A673 (cell line): ENCODE measurements at regions of chr11 and their contacts with region 1.

Region 1: DNA sequence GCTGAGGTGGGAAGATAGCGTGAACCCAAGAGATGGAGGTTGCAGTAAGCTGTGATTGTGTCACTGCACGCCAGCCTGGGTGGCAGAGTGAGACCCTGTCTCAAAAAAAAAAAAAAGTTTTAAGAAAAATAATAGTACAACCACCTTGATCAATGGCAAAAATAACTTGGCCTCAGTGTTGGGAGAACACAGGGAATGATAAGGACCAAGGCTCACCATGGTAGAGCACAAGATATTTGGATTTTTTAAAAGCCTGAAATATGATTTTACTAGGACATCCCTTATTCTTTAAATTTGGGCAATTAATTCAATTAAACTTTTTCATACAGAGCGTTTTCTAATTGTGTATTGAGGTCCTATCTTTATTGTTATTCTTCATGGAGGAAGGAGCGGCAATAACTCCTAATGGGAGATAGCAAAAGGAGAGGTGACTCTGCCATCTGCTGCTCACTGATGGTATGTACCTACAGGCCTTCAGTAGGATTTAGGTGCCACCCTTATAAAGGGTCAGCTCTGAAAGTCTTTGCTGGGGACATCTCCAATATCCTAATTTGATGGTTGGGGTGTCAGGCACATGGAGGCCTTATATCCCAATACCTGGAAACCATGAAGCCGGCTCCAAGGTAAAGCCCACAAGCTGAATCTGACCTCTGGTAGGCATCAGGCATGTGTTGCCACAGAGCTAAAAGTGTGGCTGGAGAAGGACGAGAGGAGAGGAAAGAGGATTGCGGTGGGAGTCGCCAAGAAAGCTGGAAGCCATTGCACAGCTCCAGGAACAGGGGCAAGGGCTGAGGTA is 21.9 kb upstream of the POLD3 start:
- DNase-seq: peak; percentile 81
- H3K4me3 ChIP-seq: no peak overlapping the region
- H3K27ac ChIP-seq: no peak overlapping the region
- H3K4me1 ChIP-seq: no peaks in the 10 kb centered on the region
- H3K27me3 ChIP-seq: no peaks in the 10 kb centered on the region
- CTCF ChIP-seq: peak; percentile 93

Region 2: GRCh38 chr11:74269161-74269811 is 301.2 kb before region 1 on chr11:
- CTCF ChIA-PET with region 1: interaction called, 12 read pairs
- POLR2A ChIA-PET with region 1: no interaction called
- intact Hi-C with region 1: no loop called
- DNase-seq: no peak
- H3K4me3 ChIP-seq: no peak overlapping the region
- H3K27ac ChIP-seq: no peak overlapping the region
- H3K4me1 ChIP-seq: no peaks in the 10 kb centered on the region
- H3K27me3 ChIP-seq: no peaks in the 10 kb centered on the region
- CTCF ChIP-seq: no peak

Region 3: GRCh38 chr11:74388678-74389327 is 181.7 kb before region 1 on chr11:
- CTCF ChIA-PET with region 1: interaction called, 4 read pairs
- POLR2A ChIA-PET with region 1: no interaction called
- intact Hi-C with region 1: loop called (anchors 2 kb)
- DNase-seq: peak; percentile 82
- H3K4me3 ChIP-seq: no peak overlapping the region
- H3K27ac ChIP-seq: no peak overlapping the region
- H3K4me1 ChIP-seq: peaks cover 12% of the 10 kb centered on the region
- H3K27me3 ChIP-seq: no peaks in the 10 kb centered on the region
- CTCF ChIP-seq: peak; percentile 95

Region 4: GRCh38 chr11:74731301-74732094 is 161.0 kb after region 1 on chr11 and contains the start of gene CHRDL2:
- CTCF ChIA-PET with region 1: no interaction called
- POLR2A ChIA-PET with region 1: no interaction called
- intact Hi-C with region 1: no loop called
- DNase-seq: peak; percentile 40
- H3K4me3 ChIP-seq: no peak within 1 kb of the TSS
- H3K27ac ChIP-seq: no peak within 1 kb of the TSS
- H3K4me1 ChIP-seq: no peaks in the 10 kb centered on the region
- H3K27me3 ChIP-seq: peaks cover 74% of the 10 kb centered on the region
- CTCF ChIP-seq: no peak
- total RNA-seq, gene CHRDL2: 7.7 and 11.6 TPM in 2 replicates